ENCODE measurements at regions of chrX and their contacts with region 1.

Region 1: GRCh38 chrX:103697687-103698086 is 11.2 kb upstream of the MORF4L2 start:
- DNase-seq: no peak
- ATAC-seq: no peak
- H3K4me3 ChIP-seq: no peak overlapping the region
- H3K27ac ChIP-seq: no peak overlapping the region
- H3K4me1 ChIP-seq: no peaks in the 10 kb centered on the region
- H3K27me3 ChIP-seq: no peaks in the 10 kb centered on the region

Region 2: GRCh38 chrX:103573208-103573607 is 124.5 kb before region 1 on chrX:
- intact Hi-C with region 1: no loop called
- DNase-seq: no peak
- ATAC-seq: no peak
- H3K4me3 ChIP-seq: no peak overlapping the region
- H3K27ac ChIP-seq: no peak overlapping the region
- H3K4me1 ChIP-seq: no peaks in the 10 kb centered on the region
- H3K27me3 ChIP-seq: no peaks in the 10 kb centered on the region

Region 3: GRCh38 chrX:103584596-103584995 is 113.1 kb before region 1 on chrX:
- intact Hi-C with region 1: no loop called
- DNase-seq: no peak
- ATAC-seq: no peak
- H3K4me3 ChIP-seq: peak overlapping the region; percentile 96
- H3K27ac ChIP-seq: no peak overlapping the region
- H3K4me1 ChIP-seq: no peaks in the 10 kb centered on the region
- H3K27me3 ChIP-seq: no peaks in the 10 kb centered on the region

Region 4: GRCh38 chrX:103774070-103774642 is 76.5 kb after region 1 on chrX:
- intact Hi-C with region 1: loop called in 1 of 4 experiments (anchors 10 kb)
- DNase-seq: no peak
- ATAC-seq: peak in 1 of 2 donors; percentile 62
- H3K4me3 ChIP-seq: no peak overlapping the region
- H3K27ac ChIP-seq: no peak overlapping the region
- H3K4me1 ChIP-seq: no peaks in the 10 kb centered on the region
- H3K27me3 ChIP-seq: no peaks in the 10 kb centered on the region

Region 5: GRCh38 chrX:103878466-103879122 is 180.9 kb after region 1 on chrX:
- intact Hi-C with region 1: no loop called
- DNase-seq: peak in 1 of 3 donors; percentile 12
- ATAC-seq: peak; percentile 72 to 81
- H3K4me3 ChIP-seq: no peak overlapping the region
- H3K27ac ChIP-seq: no peak overlapping the region
- H3K4me1 ChIP-seq: peaks cover 8% of the 10 kb centered on the region
- H3K27me3 ChIP-seq: no peaks in the 10 kb centered on the region

Region 6: DNA sequence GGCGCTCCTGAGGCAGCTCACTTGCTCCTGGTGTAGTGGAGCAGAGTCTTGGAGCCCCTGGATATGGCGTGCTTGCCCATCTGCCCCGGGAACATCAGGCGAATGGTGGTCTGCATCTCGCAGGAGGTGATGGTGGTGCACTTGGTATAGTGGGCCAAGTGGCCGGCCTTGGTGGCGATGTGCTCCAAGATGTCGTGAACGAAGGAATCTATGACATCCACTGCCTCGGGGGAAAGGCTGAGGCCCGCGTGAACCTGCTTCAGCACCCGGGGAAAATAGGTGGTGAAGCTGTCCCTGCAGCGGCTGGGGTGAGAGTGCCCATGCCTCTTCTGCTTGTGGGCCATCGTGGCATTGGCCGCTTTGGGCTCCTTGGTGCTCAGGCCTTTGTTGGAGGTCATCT is 206.6 kb after region 1 on chrX:
- intact Hi-C with region 1: no loop called
- DNase-seq: peak in 1 of 3 donors; percentile 51
- ATAC-seq: no peak
- H3K4me3 ChIP-seq: no peak overlapping the region
- H3K27ac ChIP-seq: no peak overlapping the region
- H3K4me1 ChIP-seq: no peaks in the 10 kb centered on the region
- H3K27me3 ChIP-seq: no peaks in the 10 kb centered on the region

Measured in right cardiac atrium (tissue), 5 donors.